ENCODE measurements at regions of chr1 and their contacts with region 1.

Region 1: DNA sequence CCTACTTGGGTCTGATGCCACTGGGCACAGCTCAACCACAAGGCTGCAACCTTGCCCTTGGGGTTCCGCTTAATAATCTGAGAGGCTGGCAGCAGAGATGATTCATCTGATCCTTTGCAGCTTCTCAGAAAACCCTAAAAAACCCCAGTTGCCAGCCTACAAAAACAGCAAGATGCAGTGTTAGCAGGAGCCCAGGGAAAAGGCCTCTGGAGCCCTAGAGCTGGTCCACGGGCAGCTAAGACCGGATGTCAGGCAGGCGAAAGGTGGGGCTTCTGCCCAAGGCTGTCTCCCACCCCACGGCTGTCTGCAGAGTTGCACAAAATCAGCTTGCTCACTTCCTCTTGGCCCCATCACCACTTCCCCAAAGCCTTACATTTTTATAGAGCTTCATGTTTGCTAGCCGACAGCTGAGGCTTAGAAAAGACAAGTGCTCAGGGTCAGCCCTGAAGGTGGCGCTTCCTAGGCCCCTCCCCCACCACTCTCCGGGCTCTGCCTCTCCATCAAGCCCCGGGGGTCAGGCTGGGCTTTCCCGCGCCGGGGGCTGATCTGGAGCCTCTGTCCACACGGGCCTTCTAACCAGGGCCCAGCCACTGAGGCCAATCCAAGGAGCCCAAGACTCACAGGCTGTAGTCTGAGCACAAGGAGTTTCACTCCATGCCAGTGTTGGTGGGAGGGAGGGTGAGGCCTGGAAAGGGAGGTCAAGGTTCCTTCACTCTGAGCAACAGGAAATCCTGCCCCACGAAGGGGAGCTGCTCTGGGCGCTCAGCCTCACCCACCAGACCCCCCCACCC is 4.2 kb upstream of the ADORA3 start:
- DNase-seq: peak; percentile 77
- H3K4me3 Mint-ChIP-seq: peak overlapping the region; percentile 54
- H3K27ac Mint-ChIP-seq: peak overlapping the region; percentile 94
- H3K4me1 Mint-ChIP-seq: peaks cover 54% of the 10 kb centered on the region
- H3K27me3 Mint-ChIP-seq: no peaks in the 10 kb centered on the region

Region 2: GRCh38 chr1:111497592-111497991 is 10.0 kb before region 1 on chr1:
- CTCF ChIA-PET with region 1: interaction called, 72 read pairs
- POLR2A ChIA-PET with region 1: interaction called, 3 read pairs
- DNase-seq: no peak
- H3K4me3 Mint-ChIP-seq: no peak overlapping the region
- H3K27ac Mint-ChIP-seq: no peak overlapping the region
- H3K4me1 Mint-ChIP-seq: peaks cover 29% of the 10 kb centered on the region
- H3K27me3 Mint-ChIP-seq: no peaks in the 10 kb centered on the region

Region 3: GRCh38 chr1:111603979-111604378 is 96.4 kb after region 1 on chr1:
- CTCF ChIA-PET with region 1: interaction called, 14 read pairs
- POLR2A ChIA-PET with region 1: interaction called, 3 read pairs
- DNase-seq: peak; percentile 90
- H3K4me3 Mint-ChIP-seq: peak overlapping the region; percentile 40
- H3K27ac Mint-ChIP-seq: peak overlapping the region; percentile 95
- H3K4me1 Mint-ChIP-seq: peaks cover 73% of the 10 kb centered on the region
- H3K27me3 Mint-ChIP-seq: no peaks in the 10 kb centered on the region

Region 4: GRCh38 chr1:111648806-111649205 is 141.2 kb after region 1 on chr1:
- CTCF ChIA-PET with region 1: interaction called, 10 read pairs
- POLR2A ChIA-PET with region 1: no interaction called
- DNase-seq: no peak
- H3K4me3 Mint-ChIP-seq: no peak overlapping the region
- H3K27ac Mint-ChIP-seq: no peak overlapping the region
- H3K4me1 Mint-ChIP-seq: peaks cover 76% of the 10 kb centered on the region
- H3K27me3 Mint-ChIP-seq: no peaks in the 10 kb centered on the region

Region 5: GRCh38 chr1:111747282-111747734 is 239.7 kb after region 1 on chr1:
- CTCF ChIA-PET with region 1: interaction called, 13 read pairs
- POLR2A ChIA-PET with region 1: interaction called, 6 read pairs
- DNase-seq: peak; percentile 87
- H3K4me3 Mint-ChIP-seq: no peak overlapping the region
- H3K27ac Mint-ChIP-seq: no peak overlapping the region
- H3K4me1 Mint-ChIP-seq: peaks cover 14% of the 10 kb centered on the region
- H3K27me3 Mint-ChIP-seq: peaks cover 17% of the 10 kb centered on the region

Measured in activated CD4-positive, alpha-beta T cell treated with anti-CD3 and anti-CD28 coated beads, Interleukin-2, amount 10 ng/mL, durations not matched to agents 7 days and 5 days (primary cell).